WTC11 (cell line): ENCODE measurements at regions of chr12 and their contacts with region 1.

Region 1: GRCh38 chr12:120086801-120087621 is 29.5 kb downstream of the RAB35 start:
- DNase-seq: peak; percentile 100
- ATAC-seq: peak; percentile 95
- H3K4me3 Mint-ChIP-seq: peak overlapping the region; percentile 66
- H3K27ac Mint-ChIP-seq: peak overlapping the region; percentile 98
- H3K4me1 Mint-ChIP-seq: peaks cover 33% of the 10 kb centered on the region
- H3K27me3 Mint-ChIP-seq: no peaks in the 10 kb centered on the region
- CTCF ChIP-seq: peak; percentile 82

Region 2: DNA sequence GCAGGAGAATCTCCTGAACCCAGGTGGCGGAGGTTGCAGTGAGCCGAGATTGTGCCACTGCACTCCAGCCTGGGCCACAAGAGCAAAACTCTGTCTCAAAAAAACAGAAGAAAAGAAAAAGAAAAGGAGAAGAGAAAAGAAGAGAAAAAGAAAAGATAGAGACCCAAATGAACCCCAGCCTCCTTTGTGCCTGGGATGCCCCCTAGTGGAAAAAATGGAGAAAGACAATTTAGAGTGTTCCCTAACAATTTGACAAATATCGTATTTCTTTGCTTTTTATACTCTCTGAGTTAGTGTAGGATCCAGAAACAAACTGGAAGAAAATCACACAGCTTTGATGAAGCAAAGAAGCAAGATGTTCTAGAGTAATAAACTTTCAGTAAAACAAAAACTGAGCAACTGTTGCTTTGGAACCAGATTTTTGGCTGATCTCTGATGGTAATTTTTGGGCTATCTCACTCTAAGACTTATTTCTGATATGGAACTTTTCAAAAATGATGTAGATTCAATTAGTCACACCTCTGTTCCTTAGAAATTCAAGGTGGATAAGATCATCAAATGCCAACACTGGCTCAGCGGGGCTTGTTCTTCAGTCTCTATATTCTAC is 437.7 kb before region 1 on chr12:
- CTCF ChIA-PET with region 1: no interaction called
- POLR2A ChIA-PET with region 1: no interaction called
- DNase-seq: no peak
- ATAC-seq: no peak
- H3K4me3 Mint-ChIP-seq: no peak overlapping the region
- H3K27ac Mint-ChIP-seq: no peak overlapping the region
- H3K4me1 Mint-ChIP-seq: no peaks in the 10 kb centered on the region
- H3K27me3 Mint-ChIP-seq: peaks cover 4% of the 10 kb centered on the region; the same call in 1 of the 2 replicates
- CTCF ChIP-seq: peak; percentile 85

Region 3: GRCh38 chr12:119988782-119989668 is 98.0 kb before region 1 on chr12 and contains the start of gene BICDL1:
- CTCF ChIA-PET with region 1: interaction called, 22 read pairs
- POLR2A ChIA-PET with region 1: interaction called, 8 read pairs
- DNase-seq: peak; percentile 97
- ATAC-seq: peak; percentile 94
- H3K4me3 Mint-ChIP-seq: peak within 1 kb of the TSS; percentile 81
- H3K27ac Mint-ChIP-seq: peak within 1 kb of the TSS; percentile 97
- H3K4me1 Mint-ChIP-seq: peaks cover 26% of the 10 kb centered on the region
- H3K27me3 Mint-ChIP-seq: peaks cover 18% of the 10 kb centered on the region
- CTCF ChIP-seq: no peak
- total RNA-seq, gene BICDL1: 17.9 to 23.1 TPM (median 20.2 TPM) in 3 replicates

Region 4: GRCh38 chr12:120013659-120014289 is 73.2 kb before region 1 on chr12:
- CTCF ChIA-PET with region 1: no interaction called
- POLR2A ChIA-PET with region 1: no interaction called
- DNase-seq: no peak
- ATAC-seq: no peak
- H3K4me3 Mint-ChIP-seq: no peak overlapping the region
- H3K27ac Mint-ChIP-seq: no peak overlapping the region
- H3K4me1 Mint-ChIP-seq: peaks cover 8% of the 10 kb centered on the region
- H3K27me3 Mint-ChIP-seq: no peaks in the 10 kb centered on the region
- CTCF ChIP-seq: no peak

Region 5: GRCh38 chr12:120116792-120117651 is 30.0 kb after region 1 on chr12:
- CTCF ChIA-PET with region 1: interaction called, 48 read pairs
- POLR2A ChIA-PET with region 1: interaction called, 23 read pairs
- DNase-seq: peak; percentile 98
- ATAC-seq: peak; percentile 83
- H3K4me3 Mint-ChIP-seq: peak overlapping the region; percentile 82
- H3K27ac Mint-ChIP-seq: peak overlapping the region; percentile 89
- H3K4me1 Mint-ChIP-seq: peaks cover 31% of the 10 kb centered on the region
- H3K27me3 Mint-ChIP-seq: no peaks in the 10 kb centered on the region; the same call in 1 of the 2 replicates
- CTCF ChIP-seq: no peak

Region 6: GRCh38 chr12:120209851-120210250 is 122.8 kb after region 1 on chr12:
- CTCF ChIA-PET with region 1: no interaction called
- POLR2A ChIA-PET with region 1: no interaction called
- DNase-seq: no peak
- ATAC-seq: no peak
- H3K4me3 Mint-ChIP-seq: no peak overlapping the region
- H3K27ac Mint-ChIP-seq: no peak overlapping the region
- H3K4me1 Mint-ChIP-seq: no peaks in the 10 kb centered on the region
- H3K27me3 Mint-ChIP-seq: no peaks in the 10 kb centered on the region
- CTCF ChIP-seq: no peak